HEK293T (cell line): ENCODE measurements at regions of chr4 and their contacts with region 1.

Region 1: GRCh38 chr4:88284439-88285234 is at the start of gene PPM1K:
- DNase-seq: peak; percentile 92

Region 2: DNA sequence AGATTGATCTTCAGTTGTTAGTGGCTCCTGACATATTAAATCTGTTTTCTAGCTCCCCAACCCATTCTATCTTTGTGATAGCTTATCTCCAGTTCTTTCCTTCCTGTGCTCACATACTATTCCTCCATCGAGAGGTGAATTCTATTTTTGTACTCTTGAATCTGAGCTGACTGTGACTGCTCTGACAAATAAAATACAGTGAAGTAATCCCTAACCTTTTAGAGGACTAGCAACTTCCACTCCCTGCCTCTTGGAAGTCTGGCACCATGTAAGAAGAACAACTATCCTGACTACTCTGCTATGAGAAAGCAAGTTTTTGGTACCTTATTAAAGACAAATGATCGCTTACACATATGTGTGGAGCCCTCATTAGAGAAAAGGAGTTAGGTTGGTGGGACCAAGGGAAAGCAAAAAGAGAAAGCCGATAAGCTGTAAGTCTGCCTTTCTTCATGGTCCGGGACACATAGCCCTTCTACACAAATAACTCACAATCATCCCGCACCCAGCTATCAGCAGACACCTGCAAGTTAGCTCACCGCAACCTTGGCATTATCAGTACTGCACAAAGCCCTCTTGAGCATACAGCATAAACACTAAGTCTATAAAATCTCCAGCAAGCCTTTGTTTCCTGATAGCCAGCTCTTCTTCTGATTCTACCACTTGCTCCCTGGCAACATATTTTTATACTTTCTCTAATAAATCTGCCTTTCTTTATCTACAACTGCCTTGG is 13.3 kb after region 1 on chr4:
- CTCF ChIA-PET with region 1: no interaction called
- POLR2A ChIA-PET with region 1: interaction called, 10 read pairs
- DNase-seq: no peak

Region 3: GRCh38 chr4:88411473-88412096 is 126.9 kb after region 1 on chr4:
- CTCF ChIA-PET with region 1: no interaction called
- POLR2A ChIA-PET with region 1: no interaction called
- DNase-seq: no peak

Region 4: DNA sequence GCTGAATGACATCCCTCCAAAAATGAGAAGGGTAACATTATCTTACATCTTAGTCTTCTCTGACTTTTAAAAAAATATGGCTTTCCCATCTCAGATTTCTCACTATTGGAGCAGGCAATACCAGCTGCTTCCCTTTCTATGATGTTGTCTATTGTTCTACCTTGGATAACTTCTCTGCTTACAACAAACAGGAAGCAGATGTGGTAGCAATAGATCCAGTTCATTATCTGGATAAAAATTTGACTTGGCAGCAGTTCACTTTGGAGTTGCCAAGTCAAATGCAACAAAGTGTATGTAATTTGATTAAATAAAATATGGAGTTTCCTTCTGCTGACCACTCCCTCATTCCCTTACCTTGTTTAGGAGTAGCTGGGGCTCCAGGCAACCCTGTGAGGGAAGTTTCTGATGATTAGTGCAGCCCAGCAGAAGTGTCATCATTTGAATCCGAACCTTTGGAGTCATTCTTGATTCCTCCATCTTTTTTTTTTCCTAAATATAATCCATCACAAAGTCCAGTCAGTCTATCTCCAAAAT is 1094.9 kb after region 1 on chr4:
- CTCF ChIA-PET with region 1: no interaction called
- POLR2A ChIA-PET with region 1: no interaction called
- DNase-seq: no peak